Mammary epithelial cell (primary cell): ENCODE measurements at regions of chr3 and their contacts with region 1.

Region 1: GRCh38 chr3:107064445-107065060 is 312.7 kb upstream of the CCDC54 start:
- DNase-seq: peak; percentile 62
- H3K4me3 ChIP-seq: no peak overlapping the region
- H3K27ac ChIP-seq: no peak overlapping the region
- H3K4me1 ChIP-seq: peaks cover 32% of the 10 kb centered on the region
- H3K27me3 ChIP-seq: no peaks in the 10 kb centered on the region
- CTCF ChIP-seq: peak; percentile 81 to 84

Region 2: GRCh38 chr3:105686278-105686897 is 1378.2 kb before region 1 on chr3:
- CTCF ChIA-PET with region 1: no interaction called
- dilution Hi-C with region 1: no loop called
- in situ Hi-C with region 1: loop called in 1 of 2 experiments (anchors 25 kb)
- intact Hi-C with region 1: loop called (anchors 10 kb)
- DNase-seq: no peak
- H3K4me3 ChIP-seq: no peak overlapping the region
- H3K27ac ChIP-seq: no peak overlapping the region
- H3K4me1 ChIP-seq: no peaks in the 10 kb centered on the region
- H3K27me3 ChIP-seq: no peaks in the 10 kb centered on the region
- CTCF ChIP-seq: peak; percentile 76 to 82

Region 3: GRCh38 chr3:106629215-106629832 is 435.2 kb before region 1 on chr3:
- CTCF ChIA-PET with region 1: no interaction called
- dilution Hi-C with region 1: no loop called
- in situ Hi-C with region 1: loop called (anchors 25 kb)
- intact Hi-C with region 1: loop called (anchors 1 kb)
- DNase-seq: no peak
- H3K4me3 ChIP-seq: no peak overlapping the region
- H3K27ac ChIP-seq: no peak overlapping the region
- H3K4me1 ChIP-seq: peaks cover 3% of the 10 kb centered on the region
- H3K27me3 ChIP-seq: no peaks in the 10 kb centered on the region
- CTCF ChIP-seq: no peak

Region 4: GRCh38 chr3:106728315-106729098 is 336.0 kb before region 1 on chr3:
- CTCF ChIA-PET with region 1: no interaction called
- dilution Hi-C with region 1: no loop called
- in situ Hi-C with region 1: no loop called
- intact Hi-C with region 1: loop called (anchors 5 kb)
- DNase-seq: peak; percentile 95
- H3K4me3 ChIP-seq: peak overlapping the region; percentile 11 to 24 (median 16)
- H3K27ac ChIP-seq: peak overlapping the region; percentile 94
- H3K4me1 ChIP-seq: peaks cover 29% of the 10 kb centered on the region
- H3K27me3 ChIP-seq: no peaks in the 10 kb centered on the region
- CTCF ChIP-seq: no peak

Region 5: DNA sequence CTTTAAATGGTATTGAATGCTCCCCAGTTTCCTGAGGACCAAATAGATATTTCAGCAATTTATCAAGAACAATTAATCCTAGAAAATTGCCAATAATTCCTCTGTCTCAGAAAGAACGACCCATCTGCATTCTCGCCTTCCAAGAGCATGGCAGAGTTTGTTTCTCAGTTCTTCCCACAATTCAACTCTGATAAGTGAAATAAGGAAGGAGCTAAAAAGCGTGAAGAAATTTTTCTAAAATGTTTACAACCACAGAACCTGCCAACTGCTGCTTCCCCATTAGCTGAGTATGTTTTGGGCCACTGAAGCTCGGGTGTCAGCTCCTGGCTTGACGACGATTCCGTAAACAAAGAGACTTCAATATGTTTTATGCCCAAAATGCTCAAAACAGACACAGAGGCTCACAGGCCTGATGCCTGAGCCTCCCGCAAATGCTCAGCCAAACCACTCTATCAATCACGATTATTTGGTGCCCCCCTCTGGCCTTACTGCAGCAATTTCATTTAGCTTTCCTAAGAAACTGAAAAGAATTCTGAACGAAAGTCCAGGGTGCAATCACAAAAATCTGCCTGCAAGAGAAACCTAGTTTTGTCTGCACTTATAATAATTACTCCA is 53.5 kb after region 1 on chr3:
- CTCF ChIA-PET with region 1: no interaction called
- dilution Hi-C with region 1: no loop called
- in situ Hi-C with region 1: no loop called
- intact Hi-C with region 1: loop called (anchors 2 kb)
- DNase-seq: peak; percentile 41
- H3K4me3 ChIP-seq: no peak overlapping the region
- H3K27ac ChIP-seq: no peak overlapping the region
- H3K4me1 ChIP-seq: no peaks in the 10 kb centered on the region
- H3K27me3 ChIP-seq: no peaks in the 10 kb centered on the region
- CTCF ChIP-seq: peak; percentile 56